Heart left ventricle (tissue), 16 donors: ENCODE measurements at regions of chr22 and their contacts with region 1.

Region 1: GRCh38 chr22:30968924-30969539 is at the start of gene TUG1:
- DNase-seq: peak; percentile 99
- ATAC-seq: peak; percentile 97 to 99 (median 98)
- H3K4me3 ChIP-seq: peak within 1 kb of the TSS; percentile 53 to 94 (median 84)
- H3K27ac ChIP-seq: peak within 1 kb of the TSS; percentile 89 to 99 (median 96)
- H3K4me1 ChIP-seq: peaks cover 0 to 61% (median 34%) of the 10 kb centered on the region in 12 donors
- H3K27me3 ChIP-seq: no peaks in the 10 kb centered on the region
- CTCF ChIP-seq: no peak
- POLR2A ChIP-seq: peak; percentile 72 to 92
- total RNA-seq, gene TUG1: 32.8 to 48.9 (median 43.3) TPM

Region 2: GRCh38 chr22:31036671-31037550 is 67.9 kb after region 1 on chr22:
- intact Hi-C with region 1: loop called in 5 of 10 experiments (anchors 5 to 10 kb)
- DNase-seq: peak in 1 of 5 donors; percentile 33
- ATAC-seq: no peak
- H3K4me3 ChIP-seq: peak overlapping the region in 6 of 12 donors; percentile 8 to 30 (median 22)
- H3K27ac ChIP-seq: peak overlapping the region in 9 of 12 donors; percentile 18 to 87 (median 34)
- H3K4me1 ChIP-seq: peaks cover 0 to 38% (median 13%) of the 10 kb centered on the region in 12 donors
- H3K27me3 ChIP-seq: no peaks in the 10 kb centered on the region
- CTCF ChIP-seq: no peak
- POLR2A ChIP-seq: no peak

Region 3: DNA sequence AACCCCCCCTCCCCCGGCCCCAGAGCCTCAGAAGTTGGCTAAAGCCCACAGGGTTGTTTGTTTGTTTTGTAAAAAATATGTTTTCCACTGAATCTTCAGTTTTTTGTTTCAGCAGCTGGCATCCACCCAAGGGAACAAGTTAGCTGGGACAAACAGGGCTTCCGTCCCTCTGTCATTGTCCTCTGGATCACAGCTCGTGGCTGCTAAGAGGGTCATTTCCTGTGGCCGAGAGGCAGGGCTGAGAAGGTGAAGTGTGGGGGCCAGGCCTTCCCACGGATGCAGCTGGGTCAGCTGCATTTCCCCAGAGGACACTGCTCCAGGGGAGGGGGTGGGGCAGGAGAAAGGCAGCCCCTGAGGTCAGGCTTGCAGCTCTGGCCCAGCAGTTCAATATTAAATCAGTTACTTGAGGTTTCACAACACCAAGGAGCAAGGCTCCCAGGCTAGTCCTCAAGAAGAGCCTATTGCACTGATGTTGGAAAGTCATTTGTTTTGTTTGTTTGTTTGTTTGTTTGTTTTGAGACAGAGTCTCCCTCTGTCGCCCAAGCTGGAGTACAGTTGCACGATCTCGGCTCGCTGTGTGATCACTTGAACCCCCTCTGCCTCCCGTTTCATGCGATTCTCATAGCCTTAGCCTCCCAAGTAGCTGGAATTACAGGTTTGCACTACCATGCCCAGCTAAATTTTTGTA is 77.7 kb after region 1 on chr22:
- intact Hi-C with region 1: loop called in 1 of 10 experiments (anchors 5 kb)
- DNase-seq: peak; percentile 87 to 91 (median 87)
- ATAC-seq: peak; percentile 83 to 95 (median 90)
- H3K4me3 ChIP-seq: no peak overlapping the region
- H3K27ac ChIP-seq: peak overlapping the region; percentile 49 to 92 (median 86)
- H3K4me1 ChIP-seq: peaks cover 5 to 80% (median 49%) of the 10 kb centered on the region in 12 donors
- H3K27me3 ChIP-seq: no peaks in the 10 kb centered on the region
- CTCF ChIP-seq: no peak
- POLR2A ChIP-seq: no peak